Prostate gland (tissue), 2 donors: ENCODE measurements at regions of chr17 and their contacts with region 1.

Region 1: DNA sequence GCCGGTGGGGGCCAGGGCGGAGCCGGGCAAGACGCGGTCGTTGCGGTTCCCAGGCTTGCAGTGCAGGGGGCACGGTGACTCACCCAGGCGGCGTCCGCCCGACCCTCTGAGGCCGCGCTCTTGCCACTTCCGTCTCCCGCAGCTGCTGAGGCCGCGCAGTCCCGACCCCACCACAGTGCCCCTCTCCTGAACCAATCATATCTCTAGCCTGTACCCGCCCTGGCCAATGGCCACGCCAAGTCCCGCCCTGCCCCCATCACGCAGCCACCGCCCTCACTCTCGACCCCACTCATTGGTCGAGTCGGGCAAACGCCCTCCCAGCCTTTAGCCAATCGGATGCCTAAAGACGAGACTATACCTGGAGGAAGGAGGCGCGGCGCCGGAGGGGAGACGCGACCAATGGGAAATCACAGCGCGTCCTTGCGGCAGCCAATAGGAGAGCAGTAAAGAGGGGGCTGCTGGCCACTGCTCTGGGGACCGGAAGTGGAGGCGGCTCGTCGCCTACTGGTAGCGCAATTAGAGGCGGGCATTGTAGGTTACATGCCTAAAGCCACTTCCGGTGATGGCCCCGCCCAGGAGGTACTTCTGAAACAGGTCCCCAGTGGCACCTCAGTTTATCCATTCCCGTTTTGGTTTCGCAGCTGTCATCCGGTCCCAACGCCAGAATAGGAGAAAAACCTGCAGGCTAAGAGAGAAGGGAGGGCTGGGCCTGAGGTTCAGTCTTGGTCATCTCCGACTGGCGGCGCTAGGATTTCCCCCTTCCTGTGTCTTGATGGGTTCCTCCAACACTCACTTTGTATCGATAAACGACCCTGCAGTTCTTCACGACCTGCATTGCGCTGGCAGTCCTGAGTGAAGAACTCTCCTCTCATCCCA is 3.5 kb upstream of the MTMR4 start:
- DNase-seq: peak; percentile 100
- H3K4me3 ChIP-seq: peak overlapping the region; percentile 71 to 74
- H3K27ac ChIP-seq: peak overlapping the region; percentile 97 to 98
- H3K4me1 ChIP-seq: peaks cover 14% of the 10 kb centered on the region
- H3K27me3 ChIP-seq: no peaks in the 10 kb centered on the region
- CTCF ChIP-seq: peak in 1 of 4 experiments; percentile 62
- POLR2A ChIP-seq: peak; percentile 56

Region 2: DNA sequence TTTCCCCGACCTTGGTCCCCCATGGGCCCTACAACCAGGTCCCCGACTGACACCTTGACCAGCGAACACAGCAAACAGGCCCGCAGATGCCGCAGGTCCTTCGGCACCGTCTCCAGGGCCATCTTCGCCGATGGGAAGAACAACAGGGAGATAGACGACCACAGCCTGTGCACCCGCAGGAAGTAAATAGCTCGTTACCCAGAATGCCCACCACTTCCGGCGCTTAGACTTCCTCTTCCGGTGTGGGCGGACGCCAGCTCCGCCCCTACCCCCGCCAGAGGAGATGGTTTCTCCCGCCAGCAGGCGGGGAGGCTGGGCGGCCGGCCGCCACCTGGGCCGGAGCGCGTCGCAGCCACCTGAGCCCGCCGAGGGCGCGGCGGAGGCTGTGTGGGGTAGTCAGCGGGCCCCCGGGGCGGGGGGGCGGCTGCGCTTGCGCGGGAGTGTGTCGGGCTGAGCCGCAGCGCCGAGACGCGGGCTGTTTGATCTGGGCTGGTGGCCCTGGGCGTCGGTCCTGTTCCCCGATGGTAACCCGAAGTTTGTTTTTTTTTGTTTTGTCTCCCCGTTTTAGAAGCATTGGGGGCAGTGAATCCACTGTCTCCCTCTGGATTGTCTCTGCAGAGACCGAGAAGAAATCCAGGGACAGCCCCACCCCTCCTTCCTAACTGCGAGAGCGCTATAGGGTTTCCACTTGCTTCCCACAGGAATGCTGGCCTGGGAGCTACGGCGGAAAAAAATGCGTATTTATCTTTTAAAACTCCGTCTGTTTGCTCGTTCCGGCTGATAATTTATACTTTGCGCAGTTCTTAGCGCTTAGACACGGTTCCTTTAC is 165.7 kb before region 1 on chr17 and contains the start of gene SUPT4H1:
- intact Hi-C with region 1: loop called (anchors 2 kb)
- DNase-seq: peak; percentile 91
- H3K4me3 ChIP-seq: peak within 1 kb of the TSS; percentile 44 to 75
- H3K27ac ChIP-seq: peak within 1 kb of the TSS; percentile 92 to 93
- H3K4me1 ChIP-seq: peaks cover 2% of the 10 kb centered on the region
- H3K27me3 ChIP-seq: no peaks in the 10 kb centered on the region
- CTCF ChIP-seq: peak; percentile 19 to 66 (median 37)
- POLR2A ChIP-seq: peak; percentile 81
- total RNA-seq, gene SUPT4H1: 44.8 to 70.0 TPM

Region 3: GRCh38 chr17:58692239-58693055 is 174.5 kb after region 1 on chr17 and contains the start of gene RAD51C:
- intact Hi-C with region 1: loop called (anchors 5 kb)
- DNase-seq: peak; percentile 65
- H3K4me3 ChIP-seq: peak within 1 kb of the TSS; percentile 54 to 58
- H3K27ac ChIP-seq: peak within 1 kb of the TSS; percentile 81 to 84
- H3K4me1 ChIP-seq: no peaks in the 10 kb centered on the region
- H3K27me3 ChIP-seq: no peaks in the 10 kb centered on the region
- CTCF ChIP-seq: peak in 1 of 4 experiments; percentile 29
- POLR2A ChIP-seq: peak; percentile 37
- total RNA-seq, gene RAD51C: 30.4 to 32.5 TPM

Region 4: GRCh38 chr17:59155439-59156182 is 637.6 kb after region 1 on chr17 and contains the start of gene PRR11:
- intact Hi-C with region 1: loop called (anchors 10 kb)
- DNase-seq: peak; percentile 99
- H3K4me3 ChIP-seq: peak within 1 kb of the TSS; percentile 54 to 71
- H3K27ac ChIP-seq: peak within 1 kb of the TSS; percentile 82 to 86
- H3K4me1 ChIP-seq: no peaks in the 10 kb centered on the region
- H3K27me3 ChIP-seq: no peaks in the 10 kb centered on the region
- CTCF ChIP-seq: no peak
- POLR2A ChIP-seq: no peak
- total RNA-seq, gene PRR11: 2.5 to 3.2 TPM

Region 5: DNA sequence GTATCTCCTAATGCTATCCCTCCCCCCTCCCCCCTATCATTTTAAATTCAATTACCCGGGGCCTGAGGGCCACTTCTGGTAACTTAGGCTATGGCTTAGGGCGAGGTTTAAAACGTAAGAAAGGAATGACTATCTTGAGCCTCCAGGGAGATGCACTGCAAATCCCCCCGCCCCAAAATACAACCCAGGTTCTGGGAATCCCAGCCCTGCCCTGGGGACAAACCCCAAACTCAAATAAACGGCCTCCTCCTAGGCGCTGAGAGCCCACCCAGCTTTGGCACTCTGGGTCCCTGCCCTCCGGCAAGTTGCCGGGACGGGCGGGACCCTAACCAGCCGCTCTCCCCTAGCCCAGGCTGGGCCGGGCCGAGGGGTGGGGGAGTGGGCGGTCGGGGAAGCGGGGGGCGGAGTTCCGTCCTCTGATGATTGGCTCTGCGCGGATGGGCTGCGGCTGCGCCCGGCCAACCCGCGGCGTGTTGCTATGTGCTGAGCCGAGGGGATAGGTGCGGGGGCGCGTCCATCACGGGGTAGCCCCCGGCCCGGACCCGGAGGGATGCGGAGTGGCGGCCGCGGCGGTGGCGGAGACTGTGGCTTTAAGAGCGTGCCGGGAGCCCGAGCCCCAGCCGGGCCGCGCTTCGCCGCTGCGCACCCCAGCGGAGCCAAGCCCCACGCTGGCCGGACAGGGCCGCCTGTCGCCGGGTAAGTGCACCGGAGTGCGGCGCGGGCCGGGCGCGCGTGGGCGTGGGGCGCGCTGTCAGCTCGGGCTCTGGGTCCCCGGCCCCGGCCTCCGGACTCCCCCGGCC is 813.4 kb after region 1 on chr17 and contains the start of gene YPEL2:
- intact Hi-C with region 1: loop called (anchors 5 kb)
- DNase-seq: peak; percentile 98
- H3K4me3 ChIP-seq: peak within 1 kb of the TSS; percentile 95 to 98
- H3K27ac ChIP-seq: peak within 1 kb of the TSS; percentile 88 to 91
- H3K4me1 ChIP-seq: peaks cover 8% of the 10 kb centered on the region
- H3K27me3 ChIP-seq: no peaks in the 10 kb centered on the region
- CTCF ChIP-seq: no peak
- POLR2A ChIP-seq: peak; percentile 90
- total RNA-seq, gene YPEL2: 12.8 to 40.3 TPM